Testis (tissue), 5 donors: ENCODE measurements at regions of chrX and their contacts with region 1.

Region 1: GRCh38 chrX:30680618-30681017 is 27.4 kb downstream of the GK start:
- DNase-seq: no peak
- H3K4me3 ChIP-seq: no peak overlapping the region
- H3K27ac ChIP-seq: no peak overlapping the region
- H3K4me1 ChIP-seq: no peaks in the 10 kb centered on the region
- H3K27me3 ChIP-seq: no peaks in the 10 kb centered on the region
- CTCF ChIP-seq: no peak
- POLR2A ChIP-seq: no peak

Region 2: DNA sequence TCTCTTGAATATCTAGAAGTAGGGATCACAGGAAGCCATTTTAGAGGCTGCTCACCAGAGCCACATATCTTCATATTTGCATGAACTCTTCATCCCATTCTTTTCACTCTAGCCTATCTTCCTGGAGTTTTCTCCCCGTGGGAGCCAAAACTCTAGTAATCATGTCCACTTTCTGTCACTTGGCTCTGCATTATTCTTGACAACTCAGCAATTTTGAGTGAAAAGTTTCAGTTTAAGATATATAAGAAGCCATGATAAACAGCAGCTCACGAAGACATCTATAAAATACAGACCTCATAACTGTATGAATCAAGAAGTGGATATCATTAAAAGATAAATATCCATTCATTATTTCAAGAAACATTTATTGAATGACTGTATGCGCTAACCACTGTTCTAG is 292.3 kb before region 1 on chrX:
- intact Hi-C with region 1: no loop called
- DNase-seq: no peak
- H3K4me3 ChIP-seq: no peak overlapping the region
- H3K27ac ChIP-seq: no peak overlapping the region
- H3K4me1 ChIP-seq: no peaks in the 10 kb centered on the region
- H3K27me3 ChIP-seq: no peaks in the 10 kb centered on the region
- CTCF ChIP-seq: no peak
- POLR2A ChIP-seq: no peak

Region 3: GRCh38 chrX:30748393-30748841 is 67.8 kb after region 1 on chrX:
- intact Hi-C with region 1: no loop called
- DNase-seq: peak; percentile 16
- H3K4me3 ChIP-seq: peak overlapping the region in 1 of 2 donors; percentile 5
- H3K27ac ChIP-seq: no peak overlapping the region
- H3K4me1 ChIP-seq: no peaks in the 10 kb centered on the region
- H3K27me3 ChIP-seq: no peaks in the 10 kb centered on the region
- CTCF ChIP-seq: no peak
- POLR2A ChIP-seq: no peak

Region 4: DNA sequence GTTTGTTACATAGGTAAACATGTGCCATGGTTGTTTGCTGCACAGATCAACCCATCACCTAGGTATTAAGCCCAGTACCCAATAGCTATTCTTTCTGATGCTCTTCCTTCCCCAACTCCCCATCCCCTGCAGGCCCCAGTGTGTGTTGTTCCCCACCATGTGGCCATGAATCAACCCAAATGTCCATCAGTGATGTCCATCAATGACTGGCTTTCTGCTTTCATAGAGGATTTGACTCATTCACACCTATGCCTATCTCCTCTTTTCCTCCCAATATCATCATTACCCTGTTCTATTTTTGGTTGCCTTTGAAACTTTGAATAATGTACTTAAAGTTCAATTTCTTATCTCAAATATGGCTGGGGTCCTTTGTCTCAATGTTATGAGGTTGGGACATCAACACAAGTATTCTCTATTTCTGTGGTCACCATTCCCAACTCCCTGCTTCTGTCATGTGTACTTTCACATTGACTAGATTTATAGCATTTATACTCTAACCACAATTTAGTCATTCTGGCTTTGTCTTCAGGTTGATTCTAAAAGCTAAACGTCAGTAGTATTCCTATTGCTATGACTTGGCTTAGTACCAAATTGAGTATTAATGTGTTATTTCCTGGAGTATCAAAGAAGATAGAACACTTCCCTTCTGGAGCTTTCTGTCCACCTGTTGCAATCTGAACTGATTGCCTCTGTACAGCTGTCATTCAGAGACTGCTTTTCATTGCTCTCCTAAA is 101.3 kb after region 1 on chrX:
- intact Hi-C with region 1: loop called (anchors 10 kb)
- DNase-seq: no peak
- H3K4me3 ChIP-seq: no peak overlapping the region
- H3K27ac ChIP-seq: no peak overlapping the region
- H3K4me1 ChIP-seq: no peaks in the 10 kb centered on the region
- H3K27me3 ChIP-seq: no peaks in the 10 kb centered on the region
- CTCF ChIP-seq: no peak
- POLR2A ChIP-seq: no peak